ENCODE measurements at regions of chr6 and their contacts with region 1.

Region 1: GRCh38 chr6:3162565-3163247 is 5.4 kb upstream of the TUBB2A start:
- DNase-seq: peak; percentile 22 to 83 (median 44)
- ATAC-seq: peak; percentile 54
- H3K4me3 ChIP-seq: peak overlapping the region; percentile 80
- H3K4me3 Mint-ChIP-seq: peak overlapping the region; percentile 85
- H3K27ac ChIP-seq: peak overlapping the region; percentile 35 to 60
- H3K27ac Mint-ChIP-seq: peak overlapping the region; percentile 87
- H3K4me1 ChIP-seq: peaks cover 46% of the 10 kb centered on the region
- H3K4me1 Mint-ChIP-seq: peaks cover 46% of the 10 kb centered on the region
- H3K27me3 ChIP-seq: no peaks in the 10 kb centered on the region
- H3K27me3 Mint-ChIP-seq: peaks cover 10% of the 10 kb centered on the region
- CTCF ChIP-seq: no peak

Region 2: GRCh38 chr6:2959909-2960719 is 202.6 kb before region 1 on chr6:
- CTCF ChIA-PET with region 1: no interaction called
- POLR2A ChIA-PET with region 1: no interaction called
- intact Hi-C with region 1: no loop called
- DNase-seq: no peak
- ATAC-seq: no peak
- H3K4me3 ChIP-seq: no peak overlapping the region
- H3K4me3 Mint-ChIP-seq: no peak overlapping the region
- H3K27ac ChIP-seq: no peak overlapping the region
- H3K27ac Mint-ChIP-seq: no peak overlapping the region
- H3K4me1 ChIP-seq: peaks cover 8% of the 10 kb centered on the region
- H3K4me1 Mint-ChIP-seq: peaks cover 9% of the 10 kb centered on the region
- H3K27me3 ChIP-seq: no peaks in the 10 kb centered on the region
- H3K27me3 Mint-ChIP-seq: no peaks in the 10 kb centered on the region
- CTCF ChIP-seq: no peak

Region 3: DNA sequence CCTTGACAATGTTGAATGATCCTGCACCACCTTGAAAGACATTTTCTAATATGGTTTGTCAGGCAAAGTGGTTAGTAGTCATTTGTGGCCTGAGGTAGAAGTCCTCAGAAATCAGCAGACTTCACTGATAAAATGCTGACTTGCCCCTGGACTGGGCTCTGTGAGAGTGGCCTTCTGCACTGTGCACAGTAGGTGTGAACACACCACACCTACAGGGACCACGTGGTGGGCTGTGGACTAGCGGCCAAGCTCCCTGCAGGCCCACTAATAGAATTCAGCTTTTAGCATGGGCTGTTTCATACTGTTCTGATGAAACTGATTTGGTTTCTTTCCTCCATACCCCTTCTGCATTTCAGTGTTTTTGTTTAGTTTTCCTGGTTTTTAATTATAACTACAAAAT is 36.9 kb before region 1 on chr6:
- CTCF ChIA-PET with region 1: interaction called, 3 read pairs
- POLR2A ChIA-PET with region 1: no interaction called
- intact Hi-C with region 1: loop called (anchors 2 kb)
- DNase-seq: no peak
- ATAC-seq: no peak
- H3K4me3 ChIP-seq: no peak overlapping the region
- H3K4me3 Mint-ChIP-seq: no peak overlapping the region
- H3K27ac ChIP-seq: no peak overlapping the region
- H3K27ac Mint-ChIP-seq: no peak overlapping the region
- H3K4me1 ChIP-seq: no peaks in the 10 kb centered on the region
- H3K4me1 Mint-ChIP-seq: peaks cover 4% of the 10 kb centered on the region
- H3K27me3 ChIP-seq: no peaks in the 10 kb centered on the region
- H3K27me3 Mint-ChIP-seq: no peaks in the 10 kb centered on the region
- CTCF ChIP-seq: no peak

Region 4: GRCh38 chr6:3222506-3223038 is 59.9 kb after region 1 on chr6:
- CTCF ChIA-PET with region 1: no interaction called
- POLR2A ChIA-PET with region 1: no interaction called
- intact Hi-C with region 1: loop called (anchors 5 kb)
- DNase-seq: no peak
- ATAC-seq: no peak
- H3K4me3 ChIP-seq: no peak overlapping the region
- H3K4me3 Mint-ChIP-seq: no peak overlapping the region
- H3K27ac ChIP-seq: no peak overlapping the region
- H3K27ac Mint-ChIP-seq: no peak overlapping the region
- H3K4me1 ChIP-seq: peaks cover 13% of the 10 kb centered on the region
- H3K4me1 Mint-ChIP-seq: peaks cover 12% of the 10 kb centered on the region
- H3K27me3 ChIP-seq: peaks cover 26 to 28% of the 10 kb centered on the region in 2 experiments
- H3K27me3 Mint-ChIP-seq: peaks cover 49% of the 10 kb centered on the region
- CTCF ChIP-seq: no peak

Region 5: DNA sequence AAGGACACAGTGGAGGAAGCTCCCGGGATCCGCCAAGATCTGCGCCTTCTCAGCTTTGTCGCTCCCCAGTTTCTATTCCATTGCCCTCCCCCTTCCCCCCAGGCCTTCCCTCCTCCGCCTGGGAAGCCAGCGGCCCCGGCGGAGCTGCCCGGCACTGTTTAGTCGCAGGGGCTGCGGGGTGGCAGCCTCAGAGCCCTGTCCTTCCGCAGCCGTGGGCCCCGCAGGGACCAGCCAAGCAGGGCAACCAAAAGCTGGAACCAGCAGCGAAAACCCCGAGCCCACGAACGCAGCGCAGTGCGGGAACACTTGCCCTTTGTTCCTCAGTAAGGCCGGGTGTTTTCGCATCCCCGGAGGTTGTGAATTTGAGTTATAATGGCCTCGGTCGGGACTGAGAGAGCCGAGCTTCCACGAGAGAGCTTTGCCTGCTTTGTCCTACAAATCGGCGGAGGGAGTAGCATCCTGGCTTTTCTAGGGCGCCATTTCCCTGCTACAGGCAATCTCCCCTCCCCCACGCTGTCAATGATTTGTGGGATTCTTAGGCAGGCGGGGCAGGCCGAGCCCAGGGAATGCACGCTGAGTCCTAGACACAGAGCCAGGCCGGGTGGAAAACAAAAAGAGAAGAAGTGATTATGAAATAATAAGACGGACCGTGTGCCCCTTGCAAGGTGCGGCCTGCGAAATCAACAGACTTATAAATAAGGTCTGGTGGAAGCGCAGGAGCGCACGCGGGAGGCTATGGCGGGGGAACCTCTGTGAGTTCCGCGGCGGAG is 68.7 kb after region 1 on chr6:
- CTCF ChIA-PET with region 1: no interaction called
- POLR2A ChIA-PET with region 1: interaction called, 3 read pairs
- intact Hi-C with region 1: loop called in 1 of 2 experiments (anchors 5 kb)
- DNase-seq: peak in 2 of 14 experiments; percentile 8 to 31
- ATAC-seq: no peak
- H3K4me3 ChIP-seq: no peak overlapping the region
- H3K4me3 Mint-ChIP-seq: peak overlapping the region; percentile 66
- H3K27ac ChIP-seq: no peak overlapping the region
- H3K27ac Mint-ChIP-seq: no peak overlapping the region
- H3K4me1 ChIP-seq: peaks cover 53% of the 10 kb centered on the region
- H3K4me1 Mint-ChIP-seq: peaks cover 53% of the 10 kb centered on the region
- H3K27me3 ChIP-seq: peaks cover 78 to 85% of the 10 kb centered on the region in 2 experiments
- H3K27me3 Mint-ChIP-seq: peaks cover 92% of the 10 kb centered on the region
- CTCF ChIP-seq: no peak

Region 6: DNA sequence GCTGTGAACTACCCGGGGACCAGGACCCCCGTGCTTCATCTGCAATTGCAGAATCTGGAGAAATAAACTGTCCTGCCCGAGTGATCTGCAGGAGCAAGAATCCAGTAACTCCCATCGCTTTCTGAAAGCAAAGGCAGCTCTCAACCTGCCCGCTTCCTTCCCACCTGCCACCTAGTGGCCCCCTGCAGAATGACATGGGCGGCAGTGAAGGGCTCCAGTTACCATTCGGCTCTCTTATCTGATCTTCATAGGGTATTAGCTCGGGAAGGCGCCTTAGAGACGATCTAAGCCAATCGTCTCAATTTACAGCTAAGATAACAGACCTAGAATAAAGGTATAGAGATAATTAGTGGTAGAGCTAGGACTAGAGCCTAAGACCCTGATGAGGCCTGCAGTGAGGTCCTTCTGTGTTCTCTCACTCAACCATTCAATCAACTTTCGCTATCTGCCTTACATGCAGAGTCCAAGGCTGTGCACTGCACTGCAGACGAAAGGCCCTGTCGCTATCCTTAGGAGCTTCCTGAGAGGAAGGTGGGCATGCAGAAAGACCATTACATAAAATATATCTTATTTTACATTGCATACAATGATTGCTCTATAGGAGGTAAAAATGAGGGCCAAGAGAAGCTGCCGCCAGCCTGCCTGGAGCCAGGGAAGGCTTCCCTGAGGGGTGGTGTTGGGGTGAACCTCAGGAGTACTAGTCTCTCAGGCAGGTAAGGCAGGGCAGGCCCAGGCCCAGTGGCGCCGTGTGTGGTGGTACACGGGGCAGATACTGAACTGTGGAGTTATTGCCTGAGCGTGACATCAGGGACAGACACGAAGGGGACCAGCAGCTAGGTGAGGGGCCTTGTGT is 89.0 kb after region 1 on chr6:
- CTCF ChIA-PET with region 1: interaction called, 10 read pairs
- POLR2A ChIA-PET with region 1: no interaction called
- intact Hi-C with region 1: loop called in 1 of 2 experiments (anchors 5 kb)
- DNase-seq: peak; percentile 64 to 87 (median 78)
- ATAC-seq: peak; percentile 99
- H3K4me3 ChIP-seq: no peak overlapping the region
- H3K4me3 Mint-ChIP-seq: no peak overlapping the region
- H3K27ac ChIP-seq: no peak overlapping the region
- H3K27ac Mint-ChIP-seq: no peak overlapping the region
- H3K4me1 ChIP-seq: peaks cover 11% of the 10 kb centered on the region
- H3K4me1 Mint-ChIP-seq: peaks cover 14% of the 10 kb centered on the region
- H3K27me3 ChIP-seq: peaks cover 6 to 26% of the 10 kb centered on the region in 2 experiments
- H3K27me3 Mint-ChIP-seq: peaks cover 43% of the 10 kb centered on the region
- CTCF ChIP-seq: peak; percentile 95

Region 7: DNA sequence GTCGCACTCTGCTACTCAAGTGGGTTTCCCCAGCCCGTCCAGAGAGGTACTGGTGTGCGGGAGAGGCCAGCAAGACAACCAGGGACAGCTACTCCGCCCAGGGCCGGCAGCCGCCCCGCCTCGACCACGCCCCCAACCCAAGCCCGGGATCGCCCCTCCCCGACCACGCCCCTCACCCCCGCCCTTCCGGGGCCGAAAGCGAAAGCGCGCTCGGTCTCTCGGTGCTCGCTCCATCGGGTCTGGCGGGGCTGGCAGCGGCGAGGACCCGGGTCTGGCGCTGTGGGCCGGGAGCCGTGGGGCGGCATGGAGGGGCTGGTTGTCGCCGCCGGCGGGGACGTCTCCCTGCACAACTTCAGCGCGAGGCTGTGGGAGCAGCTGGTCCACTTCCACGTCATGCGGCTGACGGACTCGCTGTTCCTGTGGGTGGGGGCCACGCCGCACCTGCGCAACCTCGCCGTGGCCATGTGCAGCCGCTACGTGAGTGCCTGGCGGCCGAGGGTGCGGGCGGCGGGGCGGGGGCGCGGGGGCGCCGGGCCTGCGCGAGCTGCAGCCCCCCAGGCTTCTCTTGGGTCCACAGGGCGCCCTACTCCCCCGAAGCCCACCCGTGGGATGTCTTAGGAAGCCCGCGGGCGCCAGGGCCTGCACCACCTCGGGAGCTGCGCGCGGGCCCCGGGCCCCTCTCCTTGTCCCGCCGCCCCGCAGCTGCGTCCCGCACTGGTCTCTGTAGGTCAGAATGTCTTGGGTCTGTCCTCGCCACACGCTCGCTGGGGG is 96.2 kb after region 1 on chr6 and contains the start of gene PSMG4:
- CTCF ChIA-PET with region 1: no interaction called
- POLR2A ChIA-PET with region 1: interaction called, 4 read pairs
- intact Hi-C with region 1: loop called (anchors 2 to 5 kb)
- DNase-seq: peak; percentile 83 to 96 (median 92)
- ATAC-seq: peak; percentile 74
- H3K4me3 ChIP-seq: peak within 1 kb of the TSS; percentile 80
- H3K4me3 Mint-ChIP-seq: peak within 1 kb of the TSS; percentile 96
- H3K27ac ChIP-seq: peak within 1 kb of the TSS in 1 of 2 donors; percentile 50
- H3K27ac Mint-ChIP-seq: peak within 1 kb of the TSS; percentile 92
- H3K4me1 ChIP-seq: peaks cover 45% of the 10 kb centered on the region
- H3K4me1 Mint-ChIP-seq: peaks cover 42% of the 10 kb centered on the region
- H3K27me3 ChIP-seq: no peaks in the 10 kb centered on the region
- H3K27me3 Mint-ChIP-seq: no peaks in the 10 kb centered on the region
- CTCF ChIP-seq: no peak
- total RNA-seq, gene PSMG4: 12.3 to 12.8 TPM

Measured in CD4-positive, alpha-beta T cell (primary cell).